Activated CD8-positive, alpha-beta T cell treated with anti-CD3 and anti-CD28 coated beads for 36 hours (primary cell): ENCODE measurements at regions of chr2 and their contacts with region 1.

Region 1: GRCh38 chr2:73736855-73737779 is at the start of gene TPRKB:
- DNase-seq: peak; percentile 98
- ATAC-seq: peak; percentile 99
- H3K4me3 Mint-ChIP-seq: peak within 1 kb of the TSS; percentile 97
- H3K27ac Mint-ChIP-seq: peak within 1 kb of the TSS; percentile 92
- H3K4me1 Mint-ChIP-seq: peaks cover 21% of the 10 kb centered on the region
- H3K27me3 Mint-ChIP-seq: no peaks in the 10 kb centered on the region
- CTCF ChIP-seq: no peak
- total RNA-seq, gene TPRKB: 27.0 to 29.0 TPM

Region 2: DNA sequence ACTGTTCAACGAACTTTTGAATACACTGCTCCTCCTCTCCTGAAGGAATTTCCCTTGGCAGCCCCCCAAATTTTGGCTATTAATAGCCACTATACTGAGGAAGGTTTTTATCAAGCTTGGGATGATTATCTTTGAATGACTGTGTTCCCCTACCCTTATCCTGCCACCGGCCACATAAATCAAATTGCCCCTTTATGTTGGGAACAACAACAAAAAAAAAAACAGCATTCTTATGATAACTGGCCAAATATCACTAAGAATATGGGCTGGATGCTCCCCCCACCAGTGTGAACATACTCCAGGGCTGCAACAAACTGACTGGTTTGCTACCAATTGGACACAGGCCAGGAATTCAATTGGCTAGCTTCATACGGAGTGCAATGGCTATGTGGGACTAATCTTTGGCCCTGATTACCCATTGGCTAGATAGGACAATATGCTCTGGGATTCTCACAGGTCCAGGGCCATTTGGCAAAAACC is 22.2 kb after region 1 on chr2:
- CTCF ChIA-PET with region 1: no interaction called
- POLR2A ChIA-PET with region 1: interaction called, 12 read pairs
- intact Hi-C with region 1: no loop called
- DNase-seq: no peak
- ATAC-seq: no peak
- H3K4me3 Mint-ChIP-seq: no peak overlapping the region
- H3K27ac Mint-ChIP-seq: no peak overlapping the region
- H3K4me1 Mint-ChIP-seq: no peaks in the 10 kb centered on the region
- H3K27me3 Mint-ChIP-seq: no peaks in the 10 kb centered on the region
- CTCF ChIP-seq: no peak